T-cell (primary cell): ENCODE measurements at regions of chr3 and their contacts with region 1.

Region 1: DNA sequence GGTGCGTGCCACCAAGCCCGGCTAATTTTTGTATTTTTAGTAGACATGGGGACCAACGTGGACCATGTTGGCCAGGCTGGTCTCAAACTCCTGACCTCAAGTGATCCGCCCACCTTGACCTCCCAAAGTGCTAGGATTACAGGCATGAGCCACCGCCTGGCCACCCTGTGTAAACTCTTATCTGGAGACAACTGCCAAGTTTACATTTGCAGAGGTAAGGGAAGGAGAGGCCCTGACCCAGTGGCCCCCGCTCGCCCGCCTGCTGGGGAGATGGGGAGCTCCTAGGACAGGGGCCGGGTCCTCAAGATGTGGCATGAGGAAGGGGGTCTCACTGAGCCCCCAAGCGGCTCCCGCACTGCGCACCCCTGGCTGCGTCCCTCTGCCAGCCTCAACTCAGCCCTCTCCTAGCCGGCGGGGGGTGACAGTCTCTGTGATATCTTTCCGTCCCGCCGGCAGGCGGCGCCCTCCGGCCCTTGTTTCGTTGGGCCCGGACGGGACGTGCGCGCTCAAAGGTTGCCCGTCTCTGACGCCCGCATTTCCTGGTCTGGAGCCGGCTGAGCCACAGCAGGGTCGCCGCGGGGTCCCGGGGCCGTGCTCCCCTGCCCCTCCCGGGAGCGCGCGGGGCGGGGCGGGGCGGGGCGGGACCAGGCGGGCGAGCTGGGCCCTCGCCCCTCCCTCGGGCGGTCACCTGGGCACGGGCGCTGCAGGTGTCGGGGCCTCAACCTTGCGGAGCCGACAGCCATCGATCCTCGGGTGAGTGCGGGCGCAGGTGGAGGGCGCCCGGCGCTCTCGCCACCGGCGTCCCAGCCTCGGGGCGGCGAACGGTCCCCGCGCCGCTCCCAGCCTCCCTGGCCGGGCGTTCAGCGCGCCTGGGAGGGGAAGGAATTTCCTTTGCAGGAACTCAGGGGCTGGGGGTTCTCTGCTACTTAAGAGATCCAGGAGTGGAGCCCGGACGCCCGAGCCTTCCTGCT is at the start of gene GPR160:
- DNase-seq: peak; percentile 54 to 83 (median 74)
- ATAC-seq: peak; percentile 75
- H3K4me3 ChIP-seq: peak within 1 kb of the TSS; percentile 59 to 79
- H3K4me3 Mint-ChIP-seq: peak within 1 kb of the TSS; percentile 85 to 87 (median 86)
- H3K27ac ChIP-seq: no peak within 1 kb of the TSS
- H3K27ac Mint-ChIP-seq: peak within 1 kb of the TSS in 1 of 2 donors; percentile 70
- H3K4me1 ChIP-seq: peaks cover 19 to 33% of the 10 kb centered on the region in 2 experiments
- H3K4me1 Mint-ChIP-seq: peaks cover 21 to 36% (median 31%) of the 10 kb centered on the region in 3 donors
- H3K27me3 ChIP-seq: peaks cover 0 to 3% of the 10 kb centered on the region in 2 experiments
- H3K27me3 Mint-ChIP-seq: no peaks in the 10 kb centered on the region
- total RNA-seq, gene GPR160: 4.3 to 8.4 (median 5.9) TPM

Region 2: DNA sequence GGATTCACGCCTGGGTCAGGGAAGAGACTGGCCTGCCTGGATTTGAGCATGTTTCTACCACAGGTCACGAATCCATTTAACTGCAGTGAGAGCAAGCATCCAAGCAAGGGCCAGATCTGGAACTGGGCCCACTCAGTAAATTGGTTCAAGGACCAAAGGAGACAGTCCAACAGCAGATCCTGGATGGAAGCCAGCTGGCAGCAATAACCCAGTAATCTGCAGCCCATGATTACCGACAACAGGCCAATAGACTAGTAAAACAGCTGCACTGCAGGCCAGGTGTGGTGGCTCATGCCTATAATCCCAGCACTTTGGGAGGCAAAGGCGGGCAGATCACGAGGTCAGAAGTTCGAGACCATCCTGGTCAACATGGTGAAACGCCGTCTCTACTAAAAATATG is 114.6 kb before region 1 on chr3:
- CTCF ChIA-PET with region 1: no interaction called
- POLR2A ChIA-PET with region 1: no interaction called
- DNase-seq: no peak
- ATAC-seq: no peak
- H3K4me3 ChIP-seq: no peak overlapping the region
- H3K4me3 Mint-ChIP-seq: no peak overlapping the region
- H3K27ac ChIP-seq: no peak overlapping the region
- H3K27ac Mint-ChIP-seq: no peak overlapping the region
- H3K4me1 ChIP-seq: no peaks in the 10 kb centered on the region
- H3K4me1 Mint-ChIP-seq: no peaks in the 10 kb centered on the region
- H3K27me3 ChIP-seq: no peaks in the 10 kb centered on the region
- H3K27me3 Mint-ChIP-seq: peaks cover 4% of the 10 kb centered on the region in 2 donors

Region 3: DNA sequence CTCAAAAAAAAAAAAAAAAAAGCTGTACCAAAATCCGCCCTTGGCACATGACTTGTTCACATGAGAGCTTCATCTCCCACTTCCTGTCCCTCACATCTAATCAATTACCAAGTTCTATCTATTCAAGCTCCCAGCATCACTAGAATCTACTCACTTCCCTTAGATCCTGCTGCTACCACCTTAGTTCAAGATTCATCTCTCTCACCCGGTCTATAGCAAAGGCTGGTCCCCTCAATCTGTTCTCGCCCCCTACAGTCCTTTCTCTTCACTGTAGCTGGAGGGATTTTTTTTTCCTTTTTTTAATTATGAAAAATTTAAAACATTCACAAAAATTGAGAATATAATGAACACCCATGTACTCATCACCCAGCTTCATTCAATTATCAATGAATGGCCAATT is 16.7 kb before region 1 on chr3:
- CTCF ChIA-PET with region 1: interaction called in 1 of 2 experiments, 14 read pairs
- POLR2A ChIA-PET with region 1: interaction called in 1 of 2 experiments, 3 read pairs
- DNase-seq: peak in 2 of 35 experiments; percentile 6 to 22
- ATAC-seq: peak; percentile 33 to 70 (median 49)
- H3K4me3 ChIP-seq: no peak overlapping the region
- H3K4me3 Mint-ChIP-seq: peak overlapping the region in 1 of 3 donors; percentile 15
- H3K27ac ChIP-seq: no peak overlapping the region
- H3K27ac Mint-ChIP-seq: peak overlapping the region; percentile 4 to 27
- H3K4me1 ChIP-seq: peaks cover 0 to 2% of the 10 kb centered on the region in 2 experiments
- H3K4me1 Mint-ChIP-seq: peaks cover 16 to 22% (median 18%) of the 10 kb centered on the region in 3 donors
- H3K27me3 ChIP-seq: no peaks in the 10 kb centered on the region
- H3K27me3 Mint-ChIP-seq: peaks cover 0 to 8% of the 10 kb centered on the region in 2 donors